Naive thymus-derived CD8-positive, alpha-beta T cell (primary cell): ENCODE measurements at regions of chr19 and their contacts with region 1.

Region 1: DNA sequence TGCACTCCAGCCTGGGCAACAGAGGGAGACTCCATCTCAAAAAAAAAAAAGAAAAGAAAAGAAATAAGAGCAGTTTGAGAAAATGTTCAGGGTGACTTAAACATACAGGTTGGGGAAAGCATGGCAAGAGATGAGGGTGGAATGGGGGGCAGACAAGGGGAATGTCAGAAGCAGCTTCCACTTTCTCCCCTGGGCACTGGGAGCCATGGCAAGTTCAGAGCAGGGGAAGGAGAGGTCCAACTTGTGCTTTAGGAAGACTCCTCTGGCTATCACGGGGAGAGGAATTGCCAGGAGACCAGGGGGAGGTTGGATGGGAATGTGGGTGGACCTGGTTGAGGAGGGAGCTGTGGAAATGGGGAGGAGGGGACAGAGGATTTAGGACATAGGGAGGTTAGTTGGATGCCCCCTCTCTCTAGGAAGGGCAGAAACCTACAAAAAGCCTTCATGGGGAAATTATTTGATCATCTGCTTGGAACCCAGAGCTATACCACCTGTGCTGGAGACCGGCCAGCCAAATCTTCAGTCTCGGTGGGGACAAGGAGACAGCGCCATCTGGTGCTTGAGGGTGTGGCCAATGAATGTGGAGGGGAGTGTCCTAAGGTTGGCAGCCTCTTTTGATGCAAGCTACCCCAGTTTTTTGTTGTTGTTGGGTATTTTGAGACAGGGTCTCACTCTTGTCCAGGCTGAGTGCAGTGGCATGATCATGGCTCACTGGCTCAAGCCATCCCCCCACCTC is 7.3 kb upstream of the STRN4 start:
- DNase-seq: peak; percentile 50 to 83 (median 64)
- ATAC-seq: peak; percentile 88 to 93
- H3K4me3 Mint-ChIP-seq: no peak overlapping the region
- H3K27ac Mint-ChIP-seq: peak overlapping the region in 5 of 10 donors; percentile 28 to 73 (median 40)
- H3K4me1 Mint-ChIP-seq: peaks cover 11 to 16% (median 12%) of the 10 kb centered on the region in 4 donors
- H3K27me3 Mint-ChIP-seq: no peaks in the 10 kb centered on the region

Region 2: DNA sequence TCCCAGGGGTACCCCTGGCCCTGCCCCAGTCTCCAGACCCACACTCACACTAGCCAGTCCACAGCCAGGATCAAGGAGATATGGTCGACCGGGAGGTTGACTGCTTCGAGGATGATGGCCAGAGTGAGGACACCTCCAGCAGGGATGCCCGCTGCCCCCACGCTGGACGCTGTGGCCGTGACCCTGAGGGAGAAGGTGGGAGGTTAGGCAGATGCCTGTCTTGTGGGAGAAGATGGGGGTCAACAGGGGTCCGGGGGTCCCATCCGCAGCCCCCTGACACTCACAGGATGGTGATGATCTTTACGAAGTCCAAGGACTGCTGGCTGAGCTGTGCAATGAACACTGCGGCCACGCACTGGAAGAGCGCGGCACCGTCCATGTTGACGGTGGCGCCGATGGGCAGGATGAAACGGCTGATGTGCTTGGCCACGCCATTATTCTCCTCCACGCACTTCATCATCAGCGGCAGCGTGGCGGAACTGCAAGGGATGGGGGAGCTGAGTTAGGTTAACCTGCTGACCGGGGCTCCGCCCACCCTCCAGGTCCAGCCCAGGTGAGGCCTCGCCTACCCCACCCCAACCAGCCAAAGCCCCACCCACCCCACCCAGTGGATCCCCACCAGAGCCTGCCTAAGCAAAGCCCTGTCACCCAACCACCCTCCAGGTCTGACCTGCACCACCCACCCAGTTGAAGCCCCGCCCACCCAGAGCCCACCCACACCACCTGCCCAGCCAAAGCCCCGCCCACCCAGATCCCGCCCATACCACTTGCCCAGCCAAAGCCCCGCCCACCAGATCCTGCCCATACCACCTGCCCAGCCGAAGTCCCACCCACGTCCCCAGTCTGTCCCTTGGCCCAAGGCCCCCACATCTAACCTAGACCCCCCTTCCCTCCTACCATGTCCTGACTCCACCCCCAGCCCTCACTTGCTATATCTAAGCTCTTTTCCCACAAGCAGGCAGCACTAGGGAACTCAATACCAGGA is 23.6 kb after region 1 on chr19:
- POLR2A ChIA-PET with region 1: no interaction called
- DNase-seq: no peak
- ATAC-seq: no peak
- H3K4me3 Mint-ChIP-seq: no peak overlapping the region
- H3K27ac Mint-ChIP-seq: peak overlapping the region in 3 of 10 donors; percentile 56 to 73 (median 62)
- H3K4me1 Mint-ChIP-seq: peaks cover 0 to 10% (median 5%) of the 10 kb centered on the region in 4 donors
- H3K27me3 Mint-ChIP-seq: no peaks in the 10 kb centered on the region

Region 3: GRCh38 chr19:46840136-46840942 is 86.8 kb after region 1 on chr19:
- POLR2A ChIA-PET with region 1: interaction called, 11 read pairs
- DNase-seq: peak; percentile 23 to 69 (median 48)
- ATAC-seq: peak; percentile 72 to 89
- H3K4me3 Mint-ChIP-seq: no peak overlapping the region
- H3K27ac Mint-ChIP-seq: peak overlapping the region in 3 of 10 donors; percentile 13 to 46 (median 29)
- H3K4me1 Mint-ChIP-seq: peaks cover 0 to 9% (median 5%) of the 10 kb centered on the region in 4 donors
- H3K27me3 Mint-ChIP-seq: no peaks in the 10 kb centered on the region